AG04450 (cell line): ENCODE measurements at regions of chr5 and their contacts with region 1.

Region 1: GRCh38 chr5:141960449-141961202 is 2.6 kb upstream of the PCDH12 start:
- DNase-seq: peak; percentile 48
- H3K4me3 ChIP-seq: no peak overlapping the region
- H3K27ac ChIP-seq: no peak overlapping the region
- H3K27me3 ChIP-seq: no peaks in the 10 kb centered on the region
- CTCF ChIP-seq: peak; percentile 92

Region 2: GRCh38 chr5:141681695-141682641 is 278.7 kb before region 1 on chr5 and contains the start of gene ARAP3:
- CTCF ChIA-PET with region 1: interaction called, 14 read pairs
- POLR2A ChIA-PET with region 1: no interaction called
- DNase-seq: peak; percentile 43
- H3K4me3 ChIP-seq: peak within 1 kb of the TSS; percentile 54
- H3K27ac ChIP-seq: peak within 1 kb of the TSS; percentile 77
- H3K27me3 ChIP-seq: no peaks in the 10 kb centered on the region
- CTCF ChIP-seq: no peak
- polyA plus RNA-seq, gene ARAP3: 3.5 and 4.9 TPM in 2 replicates

Region 3: DNA sequence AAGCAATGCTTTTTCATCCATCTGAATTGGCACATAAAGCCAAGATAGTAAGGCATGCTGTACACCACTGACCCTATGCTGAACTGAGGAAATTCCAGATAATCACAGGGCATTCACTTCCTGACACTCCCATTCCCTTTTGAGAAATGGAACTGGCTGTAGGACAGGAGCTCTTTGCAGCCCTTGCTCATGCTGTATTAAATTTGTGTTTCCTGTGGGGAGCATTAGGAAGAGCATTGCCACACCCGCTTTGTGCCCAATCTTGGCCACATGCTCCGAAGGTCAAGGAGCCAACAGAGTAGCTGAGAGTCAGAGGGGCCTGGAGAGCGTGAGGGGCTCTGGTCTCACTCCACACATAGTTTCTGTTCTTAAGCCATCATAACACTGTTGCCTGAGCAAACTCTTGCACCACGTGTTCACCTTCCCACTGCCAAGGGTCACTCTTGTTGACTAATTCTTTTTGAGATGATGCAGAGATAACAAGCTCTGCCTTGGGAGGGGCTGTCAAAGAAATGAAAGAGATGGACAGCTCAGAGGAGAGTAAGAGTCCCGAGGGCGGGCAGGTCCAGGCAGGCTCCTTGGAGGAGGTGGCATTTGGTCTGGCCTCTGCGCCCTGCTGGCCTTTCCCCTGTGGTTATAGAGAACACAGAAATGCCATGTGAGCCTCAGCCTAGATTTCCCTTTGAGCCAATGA is 246.9 kb before region 1 on chr5:
- CTCF ChIA-PET with region 1: no interaction called
- POLR2A ChIA-PET with region 1: no interaction called
- DNase-seq: no peak
- H3K4me3 ChIP-seq: no peak overlapping the region
- H3K27ac ChIP-seq: no peak overlapping the region
- H3K27me3 ChIP-seq: peaks cover 36% of the 10 kb centered on the region
- CTCF ChIP-seq: no peak

Region 4: GRCh38 chr5:141878711-141879425 is 81.8 kb before region 1 on chr5:
- CTCF ChIA-PET with region 1: interaction called, 24 read pairs
- POLR2A ChIA-PET with region 1: no interaction called
- DNase-seq: peak; percentile 46
- H3K4me3 ChIP-seq: peak overlapping the region; percentile 39
- H3K27ac ChIP-seq: no peak overlapping the region
- H3K27me3 ChIP-seq: peaks cover 80% of the 10 kb centered on the region
- CTCF ChIP-seq: peak; percentile 99

Region 5: GRCh38 chr5:141914199-141914743 is 46.4 kb before region 1 on chr5:
- CTCF ChIA-PET with region 1: interaction called, 11 read pairs
- POLR2A ChIA-PET with region 1: no interaction called
- DNase-seq: no peak
- H3K4me3 ChIP-seq: peak overlapping the region; percentile 40
- H3K27ac ChIP-seq: no peak overlapping the region
- H3K27me3 ChIP-seq: peaks cover 45% of the 10 kb centered on the region
- CTCF ChIP-seq: peak; percentile 12; the same call in 1 of the 2 replicates

Region 6: DNA sequence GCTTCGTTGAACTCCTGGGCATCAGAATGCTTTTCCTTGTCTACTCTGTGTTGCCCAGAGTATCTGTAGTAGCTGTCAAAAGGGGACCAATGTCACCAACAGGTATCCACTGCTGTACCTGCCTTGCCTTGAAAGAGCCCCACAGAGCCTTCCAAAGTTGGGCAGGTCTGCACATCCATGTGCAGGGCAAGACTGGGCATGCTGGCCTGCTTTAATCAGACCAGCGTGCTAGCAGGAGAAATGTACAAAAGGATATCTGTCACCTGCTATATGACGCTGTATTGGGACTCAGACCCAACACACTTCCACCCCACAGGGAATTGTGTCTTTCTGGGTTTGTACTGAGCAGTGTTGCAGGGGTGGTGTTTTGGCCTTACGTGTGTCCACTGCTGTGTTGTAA is 25.1 kb before region 1 on chr5:
- CTCF ChIA-PET with region 1: interaction called, 80 read pairs
- POLR2A ChIA-PET with region 1: no interaction called
- DNase-seq: no peak
- H3K4me3 ChIP-seq: no peak overlapping the region
- H3K27ac ChIP-seq: no peak overlapping the region
- H3K27me3 ChIP-seq: no peaks in the 10 kb centered on the region
- CTCF ChIP-seq: no peak

Region 7: GRCh38 chr5:141976176-141976575 is 15.6 kb after region 1 on chr5:
- CTCF ChIA-PET with region 1: interaction called, 78 read pairs
- POLR2A ChIA-PET with region 1: no interaction called
- DNase-seq: no peak
- H3K4me3 ChIP-seq: no peak overlapping the region
- H3K27ac ChIP-seq: no peak overlapping the region
- H3K27me3 ChIP-seq: no peaks in the 10 kb centered on the region
- CTCF ChIP-seq: no peak

Region 8: GRCh38 chr5:141992349-141992963 is 31.8 kb after region 1 on chr5:
- CTCF ChIA-PET with region 1: interaction called, 11 read pairs
- POLR2A ChIA-PET with region 1: no interaction called
- DNase-seq: no peak
- H3K4me3 ChIP-seq: no peak overlapping the region
- H3K27ac ChIP-seq: no peak overlapping the region
- H3K27me3 ChIP-seq: no peaks in the 10 kb centered on the region
- CTCF ChIP-seq: peak; percentile 75

Region 9: GRCh38 chr5:142079306-142079721 is 118.7 kb after region 1 on chr5:
- CTCF ChIA-PET with region 1: no interaction called
- POLR2A ChIA-PET with region 1: no interaction called
- DNase-seq: no peak
- H3K4me3 ChIP-seq: no peak overlapping the region
- H3K27ac ChIP-seq: no peak overlapping the region
- H3K27me3 ChIP-seq: peaks cover 14% of the 10 kb centered on the region
- CTCF ChIP-seq: no peak